GM12878 (cell line): ENCODE measurements at regions of chr5 and their contacts with region 1.

Region 1: GRCh38 chr5:44332285-44332971 is 56.8 kb downstream of the FGF10 start:
- DNase-seq: no peak
- ATAC-seq: peak; percentile 84
- H3K4me3 ChIP-seq: no peak overlapping the region
- H3K27ac ChIP-seq: no peak overlapping the region
- H3K4me1 ChIP-seq: no peaks in the 10 kb centered on the region
- H3K27me3 ChIP-seq: no peaks in the 10 kb centered on the region
- CTCF ChIP-seq: peak; percentile 54 to 57 (median 55); a peak in 5 of 6 replicates
- EP300 ChIP-seq: no peak
- POLR2A ChIP-seq: no peak
- RAD21 ChIP-seq: peak; percentile 50

Region 2: DNA sequence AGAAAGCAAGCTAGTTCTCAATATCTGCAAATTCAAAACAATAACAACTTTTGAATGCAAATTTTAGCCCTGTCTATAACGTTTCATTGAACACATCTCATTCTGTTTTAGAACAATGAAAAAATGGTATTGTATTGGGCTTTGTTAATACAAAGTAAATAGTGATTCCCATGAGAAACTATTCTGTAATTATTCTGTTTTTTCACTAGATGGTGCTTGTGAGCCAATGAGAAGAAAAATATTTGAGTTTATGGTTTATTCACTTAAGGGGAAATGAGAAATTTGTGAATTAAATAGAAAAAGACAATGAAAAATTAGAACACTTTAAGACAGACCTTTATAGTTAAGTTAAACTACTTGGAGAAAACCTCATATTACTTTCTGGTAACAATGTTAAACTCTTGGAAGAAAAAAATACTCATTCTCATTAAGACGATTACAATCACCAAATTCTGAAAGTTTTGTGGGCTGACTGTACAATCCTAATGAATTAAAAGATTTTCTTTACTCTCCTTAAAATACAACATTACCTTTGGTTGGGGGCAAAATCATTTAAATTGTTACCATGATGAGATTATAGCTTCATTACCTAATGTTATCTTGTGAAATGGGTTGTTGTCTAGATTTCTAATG is 602.5 kb before region 1 on chr5:
- CTCF ChIA-PET with region 1: interaction called, 80 read pairs
- POLR2A ChIA-PET with region 1: no interaction called
- RAD21 ChIA-PET with region 1: interaction called, 17 read pairs
- SMC1A ChIA-PET with region 1: interaction called, 26 read pairs
- in situ Hi-C with region 1: loop called (anchors 10 kb)
- intact Hi-C with region 1: loop called (anchors 1 kb)
- DNase-seq: no peak
- ATAC-seq: peak; percentile 40; the same call in 1 of the 3 replicates
- H3K4me3 ChIP-seq: no peak overlapping the region
- H3K27ac ChIP-seq: no peak overlapping the region
- H3K4me1 ChIP-seq: no peaks in the 10 kb centered on the region
- H3K27me3 ChIP-seq: no peaks in the 10 kb centered on the region; a peak in 1 of 4 replicates
- CTCF ChIP-seq: peak in 2 of 3 experiments; percentile 35 to 38; a peak in 4 of 6 replicates
- EP300 ChIP-seq: no peak
- POLR2A ChIP-seq: no peak
- RAD21 ChIP-seq: peak; percentile 54

Region 3: DNA sequence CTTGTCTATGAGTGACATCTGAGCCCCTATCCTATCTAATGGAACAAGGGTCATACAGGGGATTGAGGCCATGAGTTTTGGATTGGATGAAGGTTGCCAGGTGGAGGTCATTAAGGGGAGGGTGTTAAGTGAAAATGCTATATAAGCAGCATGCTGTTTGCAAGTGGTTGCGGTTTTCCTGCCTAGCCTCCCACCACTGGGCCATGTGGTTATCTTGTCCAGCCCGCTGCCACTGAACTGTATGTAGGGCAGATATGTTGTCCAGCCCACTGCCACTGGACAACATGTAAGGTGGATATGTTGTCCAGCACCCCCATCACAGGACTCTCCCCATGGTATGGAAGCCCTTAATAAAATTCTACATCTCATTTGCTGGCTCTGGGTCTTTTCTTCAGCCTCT is 143.2 kb before region 1 on chr5:
- CTCF ChIA-PET with region 1: no interaction called
- POLR2A ChIA-PET with region 1: no interaction called
- RAD21 ChIA-PET with region 1: no interaction called
- SMC1A ChIA-PET with region 1: no interaction called
- in situ Hi-C with region 1: no loop called
- intact Hi-C with region 1: no loop called
- DNase-seq: no peak
- ATAC-seq: peak; percentile 25; the same call in 1 of the 3 replicates
- H3K4me3 ChIP-seq: no peak overlapping the region
- H3K27ac ChIP-seq: no peak overlapping the region
- H3K4me1 ChIP-seq: no peaks in the 10 kb centered on the region
- H3K27me3 ChIP-seq: no peaks in the 10 kb centered on the region
- CTCF ChIP-seq: no peak
- EP300 ChIP-seq: no peak
- POLR2A ChIP-seq: no peak
- RAD21 ChIP-seq: no peak

Region 4: GRCh38 chr5:44546283-44546682 is 213.9 kb after region 1 on chr5:
- CTCF ChIA-PET with region 1: no interaction called
- POLR2A ChIA-PET with region 1: no interaction called
- RAD21 ChIA-PET with region 1: no interaction called
- SMC1A ChIA-PET with region 1: no interaction called
- in situ Hi-C with region 1: no loop called
- intact Hi-C with region 1: no loop called
- DNase-seq: no peak
- ATAC-seq: no peak
- H3K4me3 ChIP-seq: no peak overlapping the region
- H3K27ac ChIP-seq: no peak overlapping the region
- H3K4me1 ChIP-seq: no peaks in the 10 kb centered on the region
- H3K27me3 ChIP-seq: no peaks in the 10 kb centered on the region
- CTCF ChIP-seq: no peak
- EP300 ChIP-seq: no peak
- POLR2A ChIP-seq: no peak
- RAD21 ChIP-seq: no peak